Pancreas (tissue), 10 donors: ENCODE measurements at regions of chr6 and their contacts with region 1.

Region 1: DNA sequence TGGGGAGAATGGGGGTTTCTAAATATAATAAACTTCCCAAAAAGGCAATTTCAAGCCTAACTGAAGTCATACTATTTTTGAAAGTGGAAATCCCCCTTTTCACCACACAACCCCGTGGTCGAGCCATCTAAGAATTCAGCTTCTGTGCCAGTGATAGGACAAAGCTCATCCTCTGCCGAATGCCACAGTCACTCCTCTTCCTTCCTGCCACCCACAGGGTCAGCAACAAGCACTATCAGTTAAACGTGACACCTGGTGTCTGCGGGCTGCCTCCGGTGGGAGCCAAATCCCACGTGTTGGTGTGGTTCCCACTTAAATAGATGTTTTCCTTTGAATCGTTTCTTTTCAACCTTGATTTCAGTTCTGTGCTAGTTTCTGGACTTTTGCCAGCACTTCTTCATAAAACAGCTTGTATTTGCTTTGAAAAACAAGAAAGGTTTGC is 60.7 kb downstream of the TNFAIP3 start:
- DNase-seq: no peak
- ATAC-seq: peak in 2 of 4 donors; percentile 60 to 67
- H3K4me3 ChIP-seq: no peak overlapping the region
- H3K27ac ChIP-seq: no peak overlapping the region
- H3K4me1 ChIP-seq: peaks cover 0 to 6% (median under 1%) of the 10 kb centered on the region in 3 donors
- H3K27me3 ChIP-seq: no peaks in the 10 kb centered on the region
- CTCF ChIP-seq: no peak

Region 2: GRCh38 chr6:137641474-137642077 is 286.2 kb before region 1 on chr6:
- intact Hi-C with region 1: no loop called
- DNase-seq: peak in 4 of 6 donors; percentile 47 to 66 (median 57)
- ATAC-seq: peak; percentile 92 to 99 (median 97)
- H3K4me3 ChIP-seq: no peak overlapping the region
- H3K27ac ChIP-seq: no peak overlapping the region
- H3K4me1 ChIP-seq: peaks cover 0 to 5% (median 0%) of the 10 kb centered on the region in 3 donors
- H3K27me3 ChIP-seq: no peaks in the 10 kb centered on the region
- CTCF ChIP-seq: peak; percentile 10 to 51 (median 39)

Region 3: DNA sequence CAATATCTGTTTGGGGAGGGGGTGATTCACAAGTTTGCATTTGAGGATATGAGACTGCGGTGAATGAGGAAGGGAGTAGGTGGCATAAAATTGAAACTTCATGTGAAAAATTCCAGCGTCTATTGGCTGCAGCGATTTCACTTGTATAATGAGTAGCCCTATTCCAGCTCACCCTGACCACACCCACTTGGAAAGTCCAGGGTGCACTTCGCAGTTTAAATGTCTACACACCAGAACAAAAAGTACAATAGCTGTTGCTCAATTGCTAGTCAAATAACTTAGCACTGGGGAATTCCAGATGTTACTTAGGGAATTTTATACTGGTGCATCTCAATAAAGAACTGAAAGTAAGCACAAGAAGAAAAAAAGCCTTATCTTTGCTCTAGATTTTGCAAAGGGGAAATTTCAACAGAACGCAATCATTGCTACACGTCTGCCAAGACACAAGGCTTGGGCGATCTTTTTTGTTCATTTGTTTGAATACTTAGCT is 54.5 kb before region 1 on chr6:
- intact Hi-C with region 1: loop called in 1 of 3 experiments (anchors 10 kb)
- DNase-seq: peak in 4 of 6 donors; percentile 59 to 79 (median 69)
- ATAC-seq: peak; percentile 88 to 96 (median 90)
- H3K4me3 ChIP-seq: peak overlapping the region in 2 of 4 donors; percentile 2 to 9
- H3K27ac ChIP-seq: peak overlapping the region in 2 of 4 donors; percentile 15 to 65
- H3K4me1 ChIP-seq: peaks cover 0 to 33% (median 9%) of the 10 kb centered on the region in 3 donors
- H3K27me3 ChIP-seq: no peaks in the 10 kb centered on the region
- CTCF ChIP-seq: no peak

Region 4: DNA sequence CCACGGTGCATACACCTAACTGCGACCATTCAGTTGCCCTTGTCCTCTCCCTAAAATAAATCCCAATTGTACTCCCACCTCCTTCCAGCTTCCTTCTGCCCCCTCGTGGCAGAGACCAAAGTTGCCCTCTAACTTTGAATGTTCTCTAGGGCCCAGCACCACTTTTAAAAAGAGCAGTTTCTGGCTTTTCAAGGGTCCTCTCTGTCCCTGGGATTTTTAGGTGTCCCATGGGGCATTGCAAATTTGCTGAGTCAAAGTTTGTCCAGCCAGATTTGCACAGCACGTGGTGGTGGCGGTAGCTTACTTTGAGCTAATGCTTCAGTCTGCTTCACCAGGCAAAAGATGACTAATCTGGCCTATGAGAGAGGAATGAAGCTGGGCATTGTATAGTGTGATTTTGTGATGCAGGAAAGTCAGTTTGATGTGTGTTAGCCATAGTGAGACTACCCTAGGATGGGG is 79.2 kb after region 1 on chr6:
- intact Hi-C with region 1: no loop called
- DNase-seq: peak in 2 of 6 donors; percentile 22 to 58
- ATAC-seq: peak in 3 of 4 donors; percentile 51 to 70 (median 59)
- H3K4me3 ChIP-seq: no peak overlapping the region
- H3K27ac ChIP-seq: no peak overlapping the region
- H3K4me1 ChIP-seq: no peaks in the 10 kb centered on the region
- H3K27me3 ChIP-seq: no peaks in the 10 kb centered on the region
- CTCF ChIP-seq: peak in 3 of 4 donors; percentile 14 to 34 (median 26)

Region 5: GRCh38 chr6:138278326-138278725 is 350.5 kb after region 1 on chr6:
- intact Hi-C with region 1: no loop called
- DNase-seq: peak in 1 of 6 donors; percentile 31
- ATAC-seq: peak; percentile 53 to 87 (median 84)
- H3K4me3 ChIP-seq: no peak overlapping the region
- H3K27ac ChIP-seq: no peak overlapping the region
- H3K4me1 ChIP-seq: no peaks in the 10 kb centered on the region
- H3K27me3 ChIP-seq: no peaks in the 10 kb centered on the region
- CTCF ChIP-seq: no peak